ENCODE measurements at regions of chr11 and their contacts with region 1.

Region 1: DNA sequence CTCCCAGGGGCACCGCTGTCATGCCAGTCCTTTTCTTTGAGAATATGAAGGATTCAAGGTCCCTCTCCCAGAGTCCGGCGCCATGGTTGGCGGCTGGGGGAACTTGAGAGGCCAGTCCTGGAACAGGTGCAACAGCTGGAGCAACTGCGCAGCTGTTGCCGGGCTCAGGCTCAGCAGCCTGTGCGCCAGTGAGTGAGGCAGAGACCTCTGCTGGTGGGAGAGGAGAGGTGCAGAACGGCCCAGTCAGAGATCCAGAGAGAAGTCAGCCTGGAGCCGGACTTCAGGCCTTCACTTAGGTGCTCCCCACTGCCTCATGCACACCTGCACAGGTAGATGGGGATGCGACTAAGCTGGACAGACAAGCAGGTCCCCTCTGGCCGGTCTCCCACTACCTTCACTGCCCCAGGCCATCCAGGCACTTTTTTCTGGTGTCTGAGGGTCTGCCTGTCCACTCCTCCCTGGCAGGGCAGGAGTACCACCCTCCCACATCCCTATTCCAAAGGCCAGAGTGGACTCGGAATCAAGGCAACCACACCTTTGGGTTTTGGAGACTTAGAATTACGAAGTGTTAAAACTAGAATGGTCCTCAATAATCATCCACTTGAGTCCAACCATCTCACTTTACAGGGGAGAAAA is 4.6 kb downstream of the CHRDL2 start:
- DNase-seq: peak; percentile 31
- ATAC-seq: peak; percentile 97
- H3K4me3 Mint-ChIP-seq: no peak overlapping the region
- H3K27ac Mint-ChIP-seq: no peak overlapping the region
- H3K4me1 Mint-ChIP-seq: peaks cover 8% of the 10 kb centered on the region
- H3K27me3 Mint-ChIP-seq: peaks cover 41% of the 10 kb centered on the region
- CTCF ChIP-seq: peak; percentile 81

Region 2: GRCh38 chr11:74255741-74256369 is 470.8 kb before region 1 on chr11:
- CTCF ChIA-PET with region 1: no interaction called
- POLR2A ChIA-PET with region 1: no interaction called
- intact Hi-C with region 1: loop called (anchors 2 kb)
- DNase-seq: no peak
- ATAC-seq: peak; percentile 75
- H3K4me3 Mint-ChIP-seq: no peak overlapping the region
- H3K27ac Mint-ChIP-seq: no peak overlapping the region
- H3K4me1 Mint-ChIP-seq: no peaks in the 10 kb centered on the region
- H3K27me3 Mint-ChIP-seq: no peaks in the 10 kb centered on the region
- CTCF ChIP-seq: peak; percentile 62

Region 3: GRCh38 chr11:74400606-74401005 is 326.1 kb before region 1 on chr11:
- CTCF ChIA-PET with region 1: no interaction called
- POLR2A ChIA-PET with region 1: no interaction called
- intact Hi-C with region 1: no loop called
- DNase-seq: no peak
- ATAC-seq: no peak
- H3K4me3 Mint-ChIP-seq: no peak overlapping the region
- H3K27ac Mint-ChIP-seq: no peak overlapping the region
- H3K4me1 Mint-ChIP-seq: peaks cover 7% of the 10 kb centered on the region
- H3K27me3 Mint-ChIP-seq: no peaks in the 10 kb centered on the region
- CTCF ChIP-seq: no peak

Region 4: GRCh38 chr11:74702383-74703007 is 24.2 kb before region 1 on chr11:
- CTCF ChIA-PET with region 1: interaction called, 25 read pairs
- POLR2A ChIA-PET with region 1: no interaction called
- intact Hi-C with region 1: loop called (anchors 1 kb)
- DNase-seq: peak; percentile 20
- ATAC-seq: peak; percentile 76
- H3K4me3 Mint-ChIP-seq: no peak overlapping the region
- H3K27ac Mint-ChIP-seq: no peak overlapping the region
- H3K4me1 Mint-ChIP-seq: peaks cover under 1% of the 10 kb centered on the region
- H3K27me3 Mint-ChIP-seq: peaks cover 6% of the 10 kb centered on the region
- CTCF ChIP-seq: peak; percentile 69

Measured in activated B cell treated with CpG ODN at 0.5 μM for 24 hours (primary cell).